ENCODE measurements at regions of chr3 and their contacts with region 1.

Region 1: GRCh38 chr3:56173601-56174000 is 294.7 kb downstream of the ERC2 start:
- DNase-seq: no peak

Region 2: DNA sequence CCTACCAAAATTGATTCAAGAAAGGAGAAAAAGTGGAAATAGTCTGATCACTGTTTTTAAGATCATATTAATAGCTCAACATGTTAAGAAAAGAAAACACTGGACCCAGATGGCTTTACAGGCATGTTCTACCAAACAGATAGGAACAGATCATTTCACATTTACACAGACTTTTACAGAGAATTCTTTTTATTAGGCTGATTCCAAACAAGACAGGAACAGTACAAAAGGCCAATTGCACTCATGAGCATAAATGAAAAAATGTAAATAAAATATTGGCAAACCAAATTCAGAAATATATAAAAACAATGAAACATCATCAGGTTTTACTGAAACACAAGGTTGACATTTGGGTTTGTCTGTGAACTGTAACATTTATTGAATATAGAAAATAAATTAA is 793.0 kb before region 1 on chr3:
- intact Hi-C with region 1: loop called in 1 of 2 experiments (anchors 5 kb)
- DNase-seq: no peak

Region 3: GRCh38 chr3:57840473-57840872 is 1666.9 kb after region 1 on chr3:
- intact Hi-C with region 1: no loop called
- DNase-seq: no peak

Measured in posterior vena cava (tissue), 2 donors.